ENCODE measurements at regions of chr20 and their contacts with region 1.

Region 1: GRCh38 chr20:37527638-37528441 is at the start of gene BLCAP:
- DNase-seq: peak; percentile 96
- ATAC-seq: peak; percentile 95
- total RNA-seq, gene BLCAP: 92.1 TPM

Region 2: DNA sequence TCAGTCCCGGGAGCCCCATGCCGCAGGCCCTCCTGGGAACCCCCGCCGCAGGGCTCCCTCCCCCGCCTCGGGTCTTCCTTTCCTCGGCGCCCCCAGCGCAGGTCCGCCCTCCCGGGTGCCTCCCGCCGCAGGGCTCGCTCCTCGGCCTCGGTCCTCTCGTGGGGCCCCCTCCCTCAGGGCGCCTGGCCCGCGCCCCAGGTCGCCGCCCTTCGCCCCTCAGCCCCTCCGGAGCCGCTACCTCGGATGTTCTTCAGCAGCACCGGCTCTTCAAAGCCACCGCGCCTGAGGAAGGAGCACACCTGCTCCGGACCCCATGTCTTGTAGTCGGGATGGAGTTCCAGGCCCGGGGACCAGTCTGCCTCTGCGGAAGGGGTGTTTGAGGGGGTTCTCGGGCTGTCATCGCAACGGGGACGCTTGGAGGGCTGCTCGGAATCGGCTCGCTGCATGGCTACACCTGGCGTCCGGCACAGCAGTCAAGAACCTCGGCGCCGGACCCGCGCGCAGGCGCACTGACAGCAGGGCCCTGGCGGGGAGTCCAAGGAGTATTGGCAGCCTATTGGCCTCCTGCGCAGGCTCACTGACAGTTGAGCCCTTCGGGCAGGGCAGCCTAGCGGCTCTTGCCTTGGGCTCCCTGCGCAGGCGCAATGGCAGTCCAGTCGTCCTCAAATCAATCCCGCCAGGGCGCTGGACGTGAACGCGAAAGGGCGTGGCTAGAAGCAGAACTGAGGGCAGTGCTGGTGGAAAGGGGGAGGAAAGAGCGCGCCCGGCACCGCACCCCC is 576.5 kb before region 1 on chr20 and contains the start of gene SAMHD1:
- intact Hi-C with region 1: loop called (anchors 5 kb)
- DNase-seq: peak; percentile 99
- ATAC-seq: peak; percentile 97
- total RNA-seq, gene SAMHD1: 52.2 TPM

Region 3: DNA sequence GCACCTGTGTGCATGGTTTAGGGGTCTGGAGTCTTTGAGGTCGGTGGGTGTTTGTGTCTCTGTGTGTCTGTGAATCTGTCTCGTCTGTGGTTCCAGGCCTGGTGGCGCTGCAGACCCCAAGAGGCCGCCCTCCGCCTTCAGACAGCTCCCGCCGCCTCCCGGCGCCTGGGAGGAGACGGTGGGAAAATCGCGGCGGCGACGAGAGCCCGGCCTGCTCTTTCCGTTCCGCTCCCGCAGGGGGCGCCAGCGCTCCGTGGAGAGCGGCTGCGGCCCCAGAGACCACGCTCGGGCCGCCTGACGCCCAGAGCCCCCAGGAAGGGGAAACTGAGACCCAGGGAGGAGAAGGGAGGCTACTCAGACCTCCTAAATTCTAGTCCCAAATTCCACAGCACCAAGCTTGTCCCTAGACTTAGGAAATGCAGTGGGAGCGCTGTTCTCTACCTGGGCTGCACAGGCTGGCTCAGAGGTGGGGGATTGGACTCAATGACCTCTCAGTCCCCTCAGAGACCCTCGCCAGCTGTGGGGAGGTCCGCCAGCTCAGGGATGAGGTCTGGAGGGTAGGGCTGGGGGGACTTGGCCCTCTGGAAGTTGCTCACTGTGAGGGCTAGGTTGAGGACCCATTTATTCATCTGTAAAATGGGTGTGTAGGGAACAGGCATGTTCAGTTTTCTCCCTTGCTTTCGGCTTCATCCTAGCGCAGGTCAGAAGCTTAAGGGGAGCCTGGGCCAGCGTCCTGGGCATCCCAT is 36.7 kb after region 1 on chr20:
- intact Hi-C with region 1: no loop called
- DNase-seq: peak; percentile 79
- ATAC-seq: peak; percentile 76

Region 4: GRCh38 chr20:37697314-37697713 is 169.5 kb after region 1 on chr20:
- intact Hi-C with region 1: no loop called
- DNase-seq: no peak
- ATAC-seq: no peak